ENCODE measurements at regions of chr2 and their contacts with region 1.

Region 1: DNA sequence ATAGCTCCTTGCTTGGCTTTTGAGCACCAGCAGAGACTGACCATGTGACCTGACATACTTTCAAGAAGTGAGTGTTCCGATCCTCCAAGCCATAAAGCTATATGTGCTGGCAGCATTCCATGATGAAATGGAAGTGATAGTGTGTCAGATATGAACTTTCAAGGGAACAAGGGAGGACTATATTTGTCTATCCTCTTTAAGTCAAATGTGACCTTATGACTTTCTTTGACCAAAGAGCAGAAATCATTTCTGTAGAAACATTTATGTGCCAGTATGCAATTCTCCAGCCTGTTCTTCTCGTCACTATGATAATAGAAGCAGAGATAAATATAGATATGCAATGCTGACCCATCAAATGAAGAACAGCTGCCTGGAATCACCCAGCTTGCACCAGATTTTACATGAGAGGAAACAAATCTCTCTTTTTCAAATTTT is 14.4 kb downstream of the HYCC2 start:
- DNase-seq: peak; percentile 32
- ATAC-seq: no peak
- H3K4me3 ChIP-seq: no peak overlapping the region; a peak in 1 of 6 replicates
- H3K27ac ChIP-seq: peak overlapping the region; percentile 68
- H3K4me1 ChIP-seq: peaks cover 46% of the 10 kb centered on the region
- H3K27me3 ChIP-seq: no peaks in the 10 kb centered on the region
- CTCF ChIP-seq: no peak
- EP300 ChIP-seq: no peak
- POLR2A ChIP-seq: no peak
- RAD21 ChIP-seq: no peak

Region 2: DNA sequence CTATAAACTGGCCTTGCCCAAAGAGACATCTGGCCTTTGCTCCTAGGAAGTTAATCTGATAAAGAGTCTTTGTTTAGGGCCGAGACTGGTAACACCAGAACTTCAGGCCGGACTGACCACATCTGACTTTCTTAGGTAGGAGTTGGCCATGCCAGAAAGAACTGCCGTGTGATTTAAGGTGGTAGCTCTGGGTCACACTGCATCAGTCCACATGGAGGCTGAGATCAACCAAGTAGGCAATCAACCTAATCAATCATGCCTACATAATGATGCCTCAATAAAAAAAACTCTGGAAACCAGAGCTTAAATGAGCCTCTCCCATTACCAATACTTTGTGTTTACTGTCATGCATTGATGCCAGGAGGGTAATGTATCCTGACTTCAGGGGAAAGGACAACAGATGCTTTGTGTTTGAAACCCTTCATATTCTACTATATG is 49.5 kb before region 1 on chr2:
- CTCF ChIA-PET with region 1: no interaction called
- POLR2A ChIA-PET with region 1: no interaction called
- in situ Hi-C with region 1: loop called (anchors 5 kb)
- intact Hi-C with region 1: loop called (anchors 2 kb)
- DNase-seq: peak; percentile 52
- ATAC-seq: peak; percentile 59
- H3K4me3 ChIP-seq: peak overlapping the region in 1 of 3 experiments; percentile 34; a peak in 2 of 6 replicates
- H3K27ac ChIP-seq: peak overlapping the region; percentile 64
- H3K4me1 ChIP-seq: peaks cover 28% of the 10 kb centered on the region
- H3K27me3 ChIP-seq: no peaks in the 10 kb centered on the region
- CTCF ChIP-seq: no peak
- EP300 ChIP-seq: 0 out of 4 replicates have a peak, but pooled peaks of 1 of the 2 experiments have one; percentile 30
- POLR2A ChIP-seq: no peak
- RAD21 ChIP-seq: no peak

Region 3: DNA sequence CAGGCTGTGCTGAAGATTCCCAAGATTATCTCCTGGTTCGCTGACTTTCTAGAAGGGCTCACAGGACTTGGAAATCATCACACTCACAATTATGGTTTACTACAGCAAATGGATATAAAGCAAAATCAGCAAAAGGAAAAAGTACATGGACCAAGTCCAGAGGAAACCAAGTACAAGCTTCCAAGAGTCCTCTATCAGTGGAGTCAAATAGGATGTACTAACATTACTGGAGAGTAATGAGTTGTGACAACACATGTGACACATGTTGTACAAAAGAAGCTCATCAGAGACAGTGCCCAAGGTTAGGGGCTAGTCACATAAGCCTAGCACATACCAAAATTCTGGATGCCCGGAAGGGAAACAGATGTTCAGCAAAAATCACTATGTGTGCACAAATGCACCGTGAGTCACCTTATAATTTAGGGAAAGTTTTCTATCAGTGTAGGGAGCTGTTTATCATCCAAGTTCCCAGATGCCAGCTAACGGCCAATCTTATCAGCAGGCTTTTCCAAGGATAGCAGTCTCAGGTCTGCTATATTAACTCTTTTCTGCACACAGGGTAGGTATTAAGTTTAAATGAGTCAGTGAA is 576.7 kb after region 1 on chr2:
- CTCF ChIA-PET with region 1: no interaction called
- POLR2A ChIA-PET with region 1: no interaction called
- in situ Hi-C with region 1: no loop called
- intact Hi-C with region 1: no loop called
- DNase-seq: no peak
- ATAC-seq: no peak
- H3K4me3 ChIP-seq: no peak overlapping the region
- H3K27ac ChIP-seq: no peak overlapping the region
- H3K4me1 ChIP-seq: no peaks in the 10 kb centered on the region
- H3K27me3 ChIP-seq: no peaks in the 10 kb centered on the region
- CTCF ChIP-seq: no peak
- EP300 ChIP-seq: no peak
- POLR2A ChIP-seq: no peak
- RAD21 ChIP-seq: no peak

Region 4: DNA sequence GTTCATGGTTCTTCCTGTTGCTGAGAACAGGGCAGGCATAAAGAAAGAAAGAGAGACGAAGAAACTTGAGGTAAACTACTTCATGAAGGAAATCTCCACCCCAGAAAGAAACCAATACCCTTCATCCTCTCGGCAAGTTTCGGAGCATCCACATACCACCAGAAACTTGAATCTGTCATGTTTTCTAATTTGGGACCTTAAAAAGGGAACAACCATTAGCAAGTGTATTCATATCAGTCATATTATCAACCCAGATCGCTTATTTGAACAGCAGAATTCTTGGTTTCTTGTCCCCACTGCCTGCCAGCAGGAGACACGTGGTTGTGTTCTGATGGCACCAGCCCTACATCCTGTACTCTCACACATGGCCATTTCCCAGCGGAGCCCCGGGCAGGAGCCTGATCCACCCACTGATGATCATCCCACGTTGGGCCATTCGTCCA is 923.3 kb after region 1 on chr2:
- CTCF ChIA-PET with region 1: no interaction called
- POLR2A ChIA-PET with region 1: no interaction called
- in situ Hi-C with region 1: no loop called
- intact Hi-C with region 1: no loop called
- DNase-seq: no peak
- ATAC-seq: no peak
- H3K4me3 ChIP-seq: no peak overlapping the region
- H3K27ac ChIP-seq: no peak overlapping the region
- H3K4me1 ChIP-seq: peaks cover 28% of the 10 kb centered on the region
- H3K27me3 ChIP-seq: no peaks in the 10 kb centered on the region; a peak in 2 of 5 replicates
- CTCF ChIP-seq: no peak
- EP300 ChIP-seq: no peak
- POLR2A ChIP-seq: no peak
- RAD21 ChIP-seq: no peak

Measured in HepG2 (cell line).